H1 (cell line): ENCODE measurements at regions of chr11 and their contacts with region 1.

Region 1: GRCh38 chr11:93741094-93741881 is at the starts of genes C11orf54 and TAF1D:
- DNase-seq: peak; percentile 88 to 93
- H3K4me3 ChIP-seq: peak within 1 kb of the TSS; percentile 91 to 100 (median 98)
- H3K27ac ChIP-seq: peak within 1 kb of the TSS; percentile 93
- H3K4me1 ChIP-seq: peaks cover 3 to 9% (median 6%) of the 10 kb centered on the region in 4 experiments; a peak in 6 of 7 replicates
- H3K27me3 ChIP-seq: no peaks in the 10 kb centered on the region
- CTCF ChIP-seq: no peak
- EP300 ChIP-seq: no peak
- POLR2A ChIP-seq: peak; percentile 92 to 99
- RAD21 ChIP-seq: no peak
- total RNA-seq, gene C11orf54: 21.5 and 24.5 TPM in 2 replicates
- total RNA-seq, gene TAF1D: 202 and 212 TPM in 2 replicates

Region 2: DNA sequence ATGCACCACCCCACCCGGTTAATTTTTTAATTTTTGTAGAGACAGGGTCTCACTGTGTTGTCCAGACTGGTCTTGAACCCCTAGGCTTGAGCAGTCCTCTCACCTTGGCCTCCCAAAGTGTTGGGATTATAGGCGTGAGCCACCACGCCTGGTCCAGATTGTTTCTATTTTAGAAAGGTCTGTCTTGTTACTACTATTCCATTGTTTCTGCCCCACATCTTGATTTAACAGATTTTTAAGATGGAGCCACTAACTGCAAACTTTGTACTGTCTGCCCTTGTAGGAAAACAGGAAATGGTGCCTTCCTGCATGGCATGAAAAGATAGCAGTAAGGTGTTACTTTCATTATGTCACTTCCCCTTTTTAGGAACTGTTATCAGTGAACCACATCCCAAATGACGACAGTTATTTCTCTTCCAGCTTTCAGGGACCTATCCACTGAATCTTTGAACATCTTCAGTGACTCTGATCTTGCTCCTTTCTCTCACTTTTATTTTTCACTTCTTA is 23.2 kb before region 1 on chr11:
- CTCF ChIA-PET with region 1: interaction called, 3 read pairs
- POLR2A ChIA-PET with region 1: interaction called, 495 read pairs
- DNase-seq: no peak
- H3K4me3 ChIP-seq: no peak overlapping the region
- H3K27ac ChIP-seq: no peak overlapping the region
- H3K4me1 ChIP-seq: peaks cover 0 to 9% (median 5%) of the 10 kb centered on the region in 4 experiments; a peak in 5 of 7 replicates
- H3K27me3 ChIP-seq: no peaks in the 10 kb centered on the region
- CTCF ChIP-seq: no peak
- EP300 ChIP-seq: no peak
- POLR2A ChIP-seq: no peak
- RAD21 ChIP-seq: no peak

Region 3: GRCh38 chr11:93767018-93767417 is 25.7 kb after region 1 on chr11:
- CTCF ChIA-PET with region 1: no interaction called
- POLR2A ChIA-PET with region 1: interaction called, 41 read pairs
- DNase-seq: no peak
- H3K4me3 ChIP-seq: no peak overlapping the region
- H3K27ac ChIP-seq: no peak overlapping the region
- H3K4me1 ChIP-seq: no peaks in the 10 kb centered on the region
- H3K27me3 ChIP-seq: no peaks in the 10 kb centered on the region
- CTCF ChIP-seq: no peak
- EP300 ChIP-seq: no peak
- POLR2A ChIP-seq: no peak
- RAD21 ChIP-seq: no peak

Region 4: DNA sequence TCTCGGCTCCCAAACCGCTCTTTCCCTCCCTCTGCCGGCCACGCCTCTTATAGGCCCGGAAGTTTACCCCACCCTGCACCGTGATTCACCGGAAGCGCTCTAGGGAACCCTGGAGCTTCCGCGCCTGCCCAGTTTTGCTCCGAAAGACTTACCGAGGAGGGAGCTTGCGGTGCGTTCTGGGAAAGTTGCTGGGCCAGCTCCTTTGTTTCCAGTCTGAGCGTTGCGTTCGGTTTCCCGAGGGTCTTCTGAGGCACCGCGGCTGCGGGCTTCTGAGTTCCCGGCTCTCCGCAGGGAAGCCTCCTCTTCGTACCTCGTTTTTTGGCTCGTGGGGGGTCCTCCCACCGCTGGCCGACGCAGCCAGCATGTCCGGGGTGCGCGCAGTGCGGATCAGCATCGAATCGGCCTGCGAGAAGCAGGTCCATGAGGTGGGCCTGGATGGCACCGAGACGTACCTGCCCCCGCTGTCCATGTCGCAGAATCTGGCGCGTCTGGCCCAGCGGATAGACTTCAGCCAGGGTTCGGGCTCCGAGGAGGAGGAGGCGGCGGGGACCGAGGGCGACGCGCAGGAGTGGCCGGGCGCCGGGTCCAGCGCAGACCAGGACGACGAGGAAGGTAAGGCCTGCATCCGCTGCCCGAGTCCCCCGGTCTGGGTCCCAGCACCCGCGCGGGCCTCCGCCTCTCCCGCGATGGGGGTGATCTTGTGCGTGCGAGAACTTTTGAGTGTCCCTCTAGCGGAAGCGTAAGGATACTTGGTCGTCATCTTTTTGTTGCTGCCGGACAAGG is 43.1 kb after region 1 on chr11 and contains the start of gene MED17:
- CTCF ChIA-PET with region 1: interaction called, 10 read pairs
- POLR2A ChIA-PET with region 1: interaction called, 134 read pairs
- DNase-seq: peak; percentile 75 to 85
- H3K4me3 ChIP-seq: peak within 1 kb of the TSS; percentile 93 to 99 (median 95)
- H3K27ac ChIP-seq: peak within 1 kb of the TSS; percentile 95
- H3K4me1 ChIP-seq: peaks cover 0 to 4% (median 1%) of the 10 kb centered on the region in 4 experiments; a peak in 1 of 7 replicates
- H3K27me3 ChIP-seq: no peaks in the 10 kb centered on the region
- CTCF ChIP-seq: peak; percentile 7 to 26 (median 21); a peak in 3 of 4 replicates
- EP300 ChIP-seq: no peak
- POLR2A ChIP-seq: peak; percentile 89 to 90
- RAD21 ChIP-seq: no peak
- total RNA-seq, gene MED17: 30.4 and 33.7 TPM in 2 replicates

Region 5: DNA sequence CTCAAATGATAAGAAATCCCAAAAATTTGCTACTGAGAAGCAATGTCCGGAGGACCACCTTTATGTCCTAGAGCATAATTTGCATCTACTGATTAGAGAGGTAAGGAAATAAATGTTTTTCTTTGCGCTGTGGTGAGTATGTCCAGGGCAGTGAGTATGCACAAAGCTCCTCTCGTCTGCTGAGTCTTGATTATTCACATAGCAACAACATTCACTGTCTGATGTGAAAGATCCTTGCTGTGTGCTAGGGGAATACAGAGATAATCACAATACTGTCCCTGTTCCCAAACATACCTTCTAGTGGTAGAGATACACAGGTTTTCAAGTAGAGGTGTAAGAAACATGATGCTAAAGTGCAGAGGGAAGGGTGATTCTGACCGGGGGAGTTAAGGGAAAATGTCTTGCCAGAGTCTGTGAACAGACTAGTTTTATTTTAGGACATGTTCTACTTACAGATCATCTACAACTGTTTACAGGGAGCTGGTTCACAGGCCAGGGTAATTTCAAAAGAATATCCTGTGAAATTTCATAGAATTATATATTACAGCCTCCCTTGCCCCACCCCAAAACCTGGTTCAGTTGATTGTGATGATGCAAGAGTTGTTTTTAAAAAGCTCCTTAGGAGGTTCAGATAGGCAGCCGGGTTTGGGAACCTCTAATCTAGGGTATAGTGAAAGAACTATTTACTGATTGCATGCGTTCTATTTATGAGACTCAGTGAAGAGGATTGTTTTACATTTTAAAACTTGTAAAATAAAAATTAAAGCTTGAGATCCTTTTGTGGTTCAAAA is 55.3 kb after region 1 on chr11:
- CTCF ChIA-PET with region 1: interaction called, 3 read pairs
- POLR2A ChIA-PET with region 1: interaction called, 36 read pairs
- DNase-seq: no peak
- H3K4me3 ChIP-seq: no peak overlapping the region
- H3K27ac ChIP-seq: no peak overlapping the region
- H3K4me1 ChIP-seq: no peaks in the 10 kb centered on the region
- H3K27me3 ChIP-seq: no peaks in the 10 kb centered on the region
- CTCF ChIP-seq: no peak
- EP300 ChIP-seq: no peak
- POLR2A ChIP-seq: no peak
- RAD21 ChIP-seq: no peak

Region 6: DNA sequence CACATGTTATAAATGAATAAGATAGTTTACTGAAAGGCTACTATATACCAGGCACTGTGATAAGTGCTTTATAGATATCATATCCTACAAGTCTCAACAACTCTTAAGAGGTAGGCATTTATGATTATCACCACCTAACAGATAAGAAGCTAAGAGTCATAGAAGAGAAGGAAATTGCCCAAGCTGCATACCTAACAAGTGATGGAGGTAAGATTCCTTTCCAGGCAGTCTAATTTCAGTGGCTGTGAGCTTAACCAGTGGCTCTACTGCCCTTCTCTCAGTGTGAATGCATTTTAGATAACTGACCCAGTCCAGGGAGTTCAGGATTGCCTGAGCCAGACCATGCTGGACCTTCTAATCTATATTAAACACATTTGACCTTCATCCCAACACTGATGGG is 319.1 kb after region 1 on chr11:
- CTCF ChIA-PET with region 1: no interaction called
- POLR2A ChIA-PET with region 1: no interaction called
- DNase-seq: no peak
- H3K4me3 ChIP-seq: no peak overlapping the region
- H3K27ac ChIP-seq: no peak overlapping the region
- H3K4me1 ChIP-seq: no peaks in the 10 kb centered on the region
- H3K27me3 ChIP-seq: no peaks in the 10 kb centered on the region
- CTCF ChIP-seq: no peak
- EP300 ChIP-seq: no peak
- POLR2A ChIP-seq: no peak
- RAD21 ChIP-seq: no peak